Activated CD8-positive, alpha-beta memory T cell treated with anti-CD3 and anti-CD28 coated beads, Interleukin-2, amount 10 ng/mL, durations not matched to agents 7 days and 5 days (primary cell): ENCODE measurements at regions of chr11 and their contacts with region 1.

Region 1: GRCh38 chr11:62266558-62266957 is 3.4 kb upstream of the SCGB2A2 start:
- DNase-seq: no peak
- ATAC-seq: peak; percentile 39
- H3K4me3 Mint-ChIP-seq: no peak overlapping the region
- H3K27ac Mint-ChIP-seq: no peak overlapping the region
- H3K4me1 Mint-ChIP-seq: peaks cover 3% of the 10 kb centered on the region
- H3K27me3 Mint-ChIP-seq: peaks cover 14% of the 10 kb centered on the region

Region 2: DNA sequence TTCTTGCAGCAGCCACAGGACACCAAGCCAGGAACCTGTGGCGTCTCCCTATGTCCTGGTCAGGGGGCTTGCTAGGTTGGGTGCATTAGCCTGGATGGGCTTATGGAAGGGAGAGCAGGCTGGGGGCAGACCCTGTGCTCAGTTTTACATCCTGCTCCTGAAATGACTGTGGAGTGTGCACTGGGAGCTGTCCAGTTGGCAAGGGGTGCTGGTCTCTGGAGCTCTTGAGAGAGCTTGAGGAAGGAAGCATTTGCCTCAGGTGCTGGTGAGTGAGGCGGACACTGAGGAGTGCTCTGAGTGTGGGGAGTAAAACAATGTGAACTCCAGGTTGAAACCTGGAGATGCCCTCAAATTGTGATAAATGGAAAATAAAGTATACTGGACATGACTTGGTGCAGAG is 28.9 kb after region 1 on chr11:
- CTCF ChIA-PET with region 1: no interaction called
- DNase-seq: no peak
- ATAC-seq: peak; percentile 47
- H3K4me3 Mint-ChIP-seq: no peak overlapping the region
- H3K27ac Mint-ChIP-seq: no peak overlapping the region
- H3K4me1 Mint-ChIP-seq: no peaks in the 10 kb centered on the region
- H3K27me3 Mint-ChIP-seq: peaks cover 27% of the 10 kb centered on the region

Region 3: DNA sequence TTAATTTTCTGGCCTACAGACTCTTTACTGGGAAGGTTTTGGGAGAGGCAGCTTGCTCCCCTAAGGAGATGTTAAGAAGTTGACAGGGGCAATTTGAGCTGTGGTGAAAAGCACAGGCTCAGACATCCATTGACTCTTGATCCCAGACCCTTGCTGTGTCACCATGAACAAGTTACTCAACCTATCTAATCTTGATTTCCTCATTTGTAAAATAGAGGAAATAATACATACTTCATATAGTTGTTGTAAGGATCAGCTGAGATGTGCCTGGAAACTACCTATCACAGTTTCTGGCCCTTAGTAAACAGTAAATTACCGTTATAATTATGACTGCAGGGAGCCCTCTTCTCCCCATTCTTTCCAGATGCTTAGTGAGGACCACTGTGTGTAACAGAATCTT is 48.9 kb after region 1 on chr11:
- CTCF ChIA-PET with region 1: interaction called, 10 read pairs
- DNase-seq: no peak
- ATAC-seq: no peak
- H3K4me3 Mint-ChIP-seq: no peak overlapping the region
- H3K27ac Mint-ChIP-seq: no peak overlapping the region
- H3K4me1 Mint-ChIP-seq: peaks cover 10% of the 10 kb centered on the region
- H3K27me3 Mint-ChIP-seq: peaks cover 37% of the 10 kb centered on the region